ENCODE measurements at regions of chr10 and their contacts with region 1.

Region 1: GRCh38 chr10:50417886-50418830 is 166.8 kb upstream of the ASAH2 start:
- DNase-seq: peak; percentile 79
- H3K4me3 ChIP-seq: peak overlapping the region; percentile 25 to 86 (median 75)
- H3K27ac ChIP-seq: peak overlapping the region; percentile 47
- H3K4me1 ChIP-seq: peaks cover 14% of the 10 kb centered on the region
- H3K27me3 ChIP-seq: no peaks in the 10 kb centered on the region
- CTCF ChIP-seq: no peak
- POLR2A ChIP-seq: peak; percentile 63

Region 2: DNA sequence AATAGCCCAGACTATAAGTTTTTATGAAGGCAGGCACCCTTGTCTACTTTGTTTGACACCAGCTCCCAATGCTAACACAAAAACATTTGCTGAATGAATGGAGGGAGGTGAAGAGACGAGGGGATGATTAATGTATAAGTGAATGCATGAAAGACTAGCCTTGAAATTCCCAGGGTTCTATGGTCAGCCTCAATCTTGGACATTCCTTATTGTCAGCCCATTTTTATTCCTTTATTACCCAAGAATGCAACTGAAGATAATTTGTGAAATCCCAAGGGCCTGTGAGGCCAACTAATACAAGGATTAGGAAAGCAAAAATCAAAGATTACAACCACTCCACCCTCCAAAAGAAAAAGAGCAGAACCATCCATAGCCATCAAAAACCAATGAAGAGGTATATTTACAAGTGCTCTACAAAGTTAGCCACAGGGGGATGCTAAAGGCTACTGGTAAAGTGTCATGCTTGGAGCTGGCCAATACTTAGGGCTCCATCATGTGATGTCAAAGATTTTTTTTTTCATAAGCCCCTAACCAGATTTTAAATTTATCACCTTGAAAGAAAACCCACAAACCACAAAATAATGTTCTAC is 126.8 kb before region 1 on chr10:
- CTCF ChIA-PET with region 1: interaction called, 5 read pairs
- POLR2A ChIA-PET with region 1: no interaction called
- dilution Hi-C with region 1: no loop called
- intact Hi-C with region 1: loop called (anchors 1 kb)
- DNase-seq: peak; percentile 18
- H3K4me3 ChIP-seq: no peak overlapping the region
- H3K27ac ChIP-seq: no peak overlapping the region
- H3K4me1 ChIP-seq: no peaks in the 10 kb centered on the region
- H3K27me3 ChIP-seq: peaks cover 5 to 10% of the 10 kb centered on the region in 2 experiments
- CTCF ChIP-seq: peak in 1 of 2 donors; percentile 25
- POLR2A ChIP-seq: no peak

Region 3: GRCh38 chr10:50325449-50326171 is 92.5 kb before region 1 on chr10:
- CTCF ChIA-PET with region 1: interaction called, 4 read pairs
- POLR2A ChIA-PET with region 1: no interaction called
- dilution Hi-C with region 1: no loop called
- intact Hi-C with region 1: loop called (anchors 2 kb)
- DNase-seq: peak; percentile 74
- H3K4me3 ChIP-seq: no peak overlapping the region
- H3K27ac ChIP-seq: peak overlapping the region; percentile 23
- H3K4me1 ChIP-seq: peaks cover 24% of the 10 kb centered on the region
- H3K27me3 ChIP-seq: no peaks in the 10 kb centered on the region
- CTCF ChIP-seq: no peak
- POLR2A ChIP-seq: no peak

Region 4: GRCh38 chr10:50360077-50360850 is 57.9 kb before region 1 on chr10:
- CTCF ChIA-PET with region 1: no interaction called
- POLR2A ChIA-PET with region 1: no interaction called
- dilution Hi-C with region 1: no loop called
- intact Hi-C with region 1: no loop called
- DNase-seq: no peak
- H3K4me3 ChIP-seq: no peak overlapping the region
- H3K27ac ChIP-seq: no peak overlapping the region
- H3K4me1 ChIP-seq: peaks cover 4% of the 10 kb centered on the region
- H3K27me3 ChIP-seq: no peaks in the 10 kb centered on the region
- CTCF ChIP-seq: no peak
- POLR2A ChIP-seq: no peak

Region 5: GRCh38 chr10:50396491-50397311 is 21.5 kb before region 1 on chr10:
- CTCF ChIA-PET with region 1: interaction called, 4 read pairs
- POLR2A ChIA-PET with region 1: no interaction called
- dilution Hi-C with region 1: no loop called
- intact Hi-C with region 1: loop called (anchors 2 kb)
- DNase-seq: no peak
- H3K4me3 ChIP-seq: no peak overlapping the region
- H3K27ac ChIP-seq: no peak overlapping the region
- H3K4me1 ChIP-seq: peaks cover 18% of the 10 kb centered on the region
- H3K27me3 ChIP-seq: no peaks in the 10 kb centered on the region
- CTCF ChIP-seq: no peak
- POLR2A ChIP-seq: no peak

Region 6: DNA sequence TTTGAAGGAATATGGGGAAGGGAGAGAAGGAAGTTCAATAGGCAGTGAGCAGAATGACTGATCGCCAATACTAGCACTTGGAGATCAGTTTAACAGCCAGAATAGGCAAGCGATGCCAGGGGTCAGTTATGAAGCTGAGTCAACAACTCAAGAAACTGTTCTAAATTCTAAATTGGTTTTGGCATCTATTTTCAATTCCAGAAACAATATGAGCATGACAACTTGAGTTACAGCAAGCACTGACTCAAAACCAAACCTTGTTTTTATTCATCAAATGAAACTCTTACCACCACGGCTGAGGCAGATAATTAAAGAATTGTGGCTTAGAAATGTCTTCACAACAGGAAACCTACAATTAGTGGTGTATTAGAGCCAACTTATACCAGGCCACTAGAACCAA is 13.6 kb after region 1 on chr10:
- CTCF ChIA-PET with region 1: interaction called, 6 read pairs
- POLR2A ChIA-PET with region 1: interaction called, 4 read pairs
- dilution Hi-C with region 1: no loop called
- intact Hi-C with region 1: loop called (anchors 1 kb)
- DNase-seq: peak; percentile 69
- H3K4me3 ChIP-seq: no peak overlapping the region
- H3K27ac ChIP-seq: peak overlapping the region; percentile 7
- H3K4me1 ChIP-seq: peaks cover 18% of the 10 kb centered on the region
- H3K27me3 ChIP-seq: no peaks in the 10 kb centered on the region
- CTCF ChIP-seq: no peak
- POLR2A ChIP-seq: no peak

Region 7: GRCh38 chr10:50674469-50675254 is 256.5 kb after region 1 on chr10:
- CTCF ChIA-PET with region 1: no interaction called
- POLR2A ChIA-PET with region 1: no interaction called
- dilution Hi-C with region 1: no loop called
- intact Hi-C with region 1: no loop called
- DNase-seq: no peak
- H3K4me3 ChIP-seq: no peak overlapping the region
- H3K27ac ChIP-seq: no peak overlapping the region
- H3K4me1 ChIP-seq: no peaks in the 10 kb centered on the region
- H3K27me3 ChIP-seq: no peaks in the 10 kb centered on the region
- CTCF ChIP-seq: no peak
- POLR2A ChIP-seq: no peak

Measured in endothelial cell of umbilical vein (primary cell).